Transverse colon (tissue), 4 donors: ENCODE measurements at regions of chr11 and their contacts with region 1.

Region 1: GRCh38 chr11:83071567-83072349 is at the start of gene RAB30:
- DNase-seq: peak; percentile 97
- H3K4me3 ChIP-seq: peak within 1 kb of the TSS; percentile 66 to 84 (median 80)
- H3K27ac ChIP-seq: peak within 1 kb of the TSS; percentile 90 to 96 (median 95)
- H3K4me1 ChIP-seq: peaks cover 13 to 49% (median 32%) of the 10 kb centered on the region in 4 donors
- H3K27me3 ChIP-seq: no peaks in the 10 kb centered on the region
- CTCF ChIP-seq: peak in 1 of 5 experiments; percentile 11
- EP300 ChIP-seq: no peak
- POLR2A ChIP-seq: peak; percentile 96
- total RNA-seq, gene RAB30: 2.2 to 29.9 (median 14.5) TPM

Region 2: GRCh38 chr11:82233201-82233600 is 838.6 kb before region 1 on chr11:
- in situ Hi-C with region 1: no loop called
- intact Hi-C with region 1: no loop called
- DNase-seq: no peak
- H3K4me3 ChIP-seq: no peak overlapping the region
- H3K27ac ChIP-seq: no peak overlapping the region
- H3K4me1 ChIP-seq: no peaks in the 10 kb centered on the region
- H3K27me3 ChIP-seq: no peaks in the 10 kb centered on the region
- CTCF ChIP-seq: no peak
- EP300 ChIP-seq: no peak
- POLR2A ChIP-seq: no peak

Region 3: DNA sequence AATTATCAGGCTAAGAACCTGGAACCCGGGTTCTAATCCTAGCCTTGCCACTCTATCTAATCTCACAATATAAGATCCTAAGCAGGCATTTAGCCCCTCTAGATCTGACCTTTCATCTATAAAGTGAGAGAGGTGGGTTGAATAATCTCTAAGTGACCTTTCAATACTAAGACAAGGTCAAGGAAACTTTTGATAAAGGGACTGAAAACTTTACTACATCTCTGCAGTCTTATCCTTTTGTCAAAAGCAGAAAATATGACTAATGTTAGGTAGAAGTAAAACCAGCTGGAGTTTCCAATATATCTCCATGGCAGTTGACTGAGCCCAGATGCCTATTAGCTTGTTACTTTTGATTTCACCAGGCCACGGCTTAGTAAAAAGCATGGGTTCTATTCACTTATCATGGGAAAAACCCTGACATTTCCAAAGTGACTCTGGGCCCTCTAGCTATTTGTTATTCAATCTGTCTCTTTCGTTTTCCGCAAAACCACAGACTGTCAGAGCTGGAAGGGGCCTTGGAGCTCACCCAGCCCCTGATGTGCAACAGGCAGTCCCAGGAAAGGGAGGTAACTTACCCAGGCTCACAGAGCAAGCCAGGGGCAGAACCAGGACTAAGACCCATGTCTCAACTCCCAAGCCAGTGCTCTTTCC is 75.9 kb before region 1 on chr11:
- in situ Hi-C with region 1: no loop called
- intact Hi-C with region 1: no loop called
- DNase-seq: no peak
- H3K4me3 ChIP-seq: no peak overlapping the region
- H3K27ac ChIP-seq: peak overlapping the region; percentile 58 to 83 (median 78)
- H3K4me1 ChIP-seq: peaks cover 4 to 48% (median 28%) of the 10 kb centered on the region in 4 donors
- H3K27me3 ChIP-seq: no peaks in the 10 kb centered on the region
- CTCF ChIP-seq: no peak
- EP300 ChIP-seq: no peak
- POLR2A ChIP-seq: no peak

Region 4: GRCh38 chr11:83156150-83156995 is 84.6 kb after region 1 on chr11:
- in situ Hi-C with region 1: loop called in 1 of 4 experiments (anchors 10 kb)
- intact Hi-C with region 1: loop called (anchors 5 kb)
- DNase-seq: peak; percentile 99
- H3K4me3 ChIP-seq: peak overlapping the region; percentile 30 to 80 (median 62)
- H3K27ac ChIP-seq: peak overlapping the region; percentile 91 to 100 (median 98)
- H3K4me1 ChIP-seq: peaks cover 10 to 30% (median 24%) of the 10 kb centered on the region in 4 donors
- H3K27me3 ChIP-seq: no peaks in the 10 kb centered on the region
- CTCF ChIP-seq: no peak
- EP300 ChIP-seq: no peak
- POLR2A ChIP-seq: no peak

Region 5: GRCh38 chr11:83187465-83187864 is 115.7 kb after region 1 on chr11:
- in situ Hi-C with region 1: loop called in 2 of 4 experiments (anchors 10 to 25 kb)
- intact Hi-C with region 1: no loop called
- DNase-seq: no peak
- H3K4me3 ChIP-seq: no peak overlapping the region
- H3K27ac ChIP-seq: no peak overlapping the region
- H3K4me1 ChIP-seq: peaks cover 3 to 8% (median 6%) of the 10 kb centered on the region in 4 donors
- H3K27me3 ChIP-seq: no peaks in the 10 kb centered on the region
- CTCF ChIP-seq: no peak
- EP300 ChIP-seq: no peak
- POLR2A ChIP-seq: no peak